ENCODE measurements at regions of chr6 and their contacts with region 1.

Region 1: DNA sequence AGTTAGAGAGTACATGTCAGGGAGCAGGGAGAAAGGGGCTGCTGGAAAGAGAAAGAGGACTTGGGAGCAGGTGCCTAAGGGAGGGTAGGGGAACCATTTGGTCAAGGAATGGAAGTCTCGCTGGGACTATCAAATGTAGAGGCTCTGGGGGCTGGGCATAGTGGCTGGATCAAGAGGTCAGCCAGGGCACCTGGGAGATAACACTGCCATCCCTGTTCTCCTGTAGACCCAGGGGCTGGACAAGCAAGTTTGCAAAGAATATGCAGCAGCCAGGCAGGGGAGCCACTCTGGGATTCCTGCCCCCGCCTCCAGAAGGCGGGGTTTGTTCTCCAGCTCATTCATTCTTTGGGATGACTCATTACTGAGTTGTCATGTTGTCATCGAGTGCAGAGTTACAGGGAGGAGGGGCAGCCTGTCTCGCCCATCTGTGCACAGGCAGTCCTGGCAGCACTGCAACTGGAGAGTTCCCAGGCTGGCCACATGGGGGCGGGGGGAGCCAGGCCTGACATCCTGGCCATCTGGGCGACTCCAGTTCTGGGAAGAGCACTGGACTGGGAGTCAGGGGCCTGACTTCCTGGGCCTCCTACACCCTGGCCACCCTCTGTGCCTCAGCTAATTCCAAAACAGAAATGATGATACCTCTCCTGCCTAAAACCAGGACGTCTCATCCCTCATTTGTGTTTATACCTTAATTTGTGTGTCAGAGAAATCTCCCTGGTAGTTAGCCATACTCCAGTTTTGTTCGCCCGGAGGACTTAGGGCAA is 28.2 kb upstream of the ZFAND3 start:
- DNase-seq: peak; percentile 87
- CTCF ChIP-seq: peak; percentile 95

Region 2: GRCh38 chr6:37807656-37808055 is 16.3 kb after region 1 on chr6:
- CTCF ChIA-PET with region 1: interaction called, 15 read pairs
- POLR2A ChIA-PET with region 1: interaction called, 3 read pairs
- DNase-seq: no peak
- CTCF ChIP-seq: no peak

Region 3: DNA sequence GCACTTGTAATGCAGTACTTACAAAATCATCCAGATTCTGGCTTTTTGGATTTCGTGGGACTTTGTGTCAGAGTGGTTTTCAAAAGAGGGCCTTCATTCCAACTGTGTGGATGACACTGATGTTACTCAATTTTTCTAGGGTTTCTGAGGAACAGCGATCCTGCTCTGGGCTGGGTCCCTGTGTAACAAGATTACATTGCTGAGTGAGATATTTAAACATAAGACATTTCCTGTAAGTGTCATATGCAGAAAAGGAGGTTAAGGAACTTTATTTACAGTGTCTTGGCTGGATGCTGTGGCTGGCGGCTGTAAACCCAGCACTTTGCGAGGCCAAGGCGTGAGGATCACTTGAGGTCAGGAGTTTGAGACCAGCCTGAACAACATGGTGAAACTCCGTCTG is 34.9 kb after region 1 on chr6:
- CTCF ChIA-PET with region 1: interaction called, 10 read pairs
- POLR2A ChIA-PET with region 1: no interaction called
- DNase-seq: no peak
- CTCF ChIP-seq: no peak

Region 4: GRCh38 chr6:37882724-37883413 is 91.5 kb after region 1 on chr6:
- CTCF ChIA-PET with region 1: no interaction called
- POLR2A ChIA-PET with region 1: no interaction called
- DNase-seq: no peak
- CTCF ChIP-seq: no peak